Activated T-helper 2 cell treated with anti-CD3 and anti-CD28 coated beads, Interferon-gamma antibody, Interleukin-2, Interleukin-4, amounts not matched to agents 10 μg/mL and 5 μg/mL and 100 μg/mL, durations not matched to agents 14 hours and 24 hours and 36 hours (primary cell): ENCODE measurements at regions of chr6 and their contacts with region 1.

Region 1: GRCh38 chr6:17633465-17634188 is 33.5 kb downstream of the FAM8A1 start:
- DNase-seq: no peak
- H3K4me3 Mint-ChIP-seq: no peak overlapping the region
- H3K27ac Mint-ChIP-seq: peak overlapping the region; percentile 86
- H3K4me1 Mint-ChIP-seq: peaks cover 42% of the 10 kb centered on the region
- H3K27me3 Mint-ChIP-seq: no peaks in the 10 kb centered on the region

Region 2: DNA sequence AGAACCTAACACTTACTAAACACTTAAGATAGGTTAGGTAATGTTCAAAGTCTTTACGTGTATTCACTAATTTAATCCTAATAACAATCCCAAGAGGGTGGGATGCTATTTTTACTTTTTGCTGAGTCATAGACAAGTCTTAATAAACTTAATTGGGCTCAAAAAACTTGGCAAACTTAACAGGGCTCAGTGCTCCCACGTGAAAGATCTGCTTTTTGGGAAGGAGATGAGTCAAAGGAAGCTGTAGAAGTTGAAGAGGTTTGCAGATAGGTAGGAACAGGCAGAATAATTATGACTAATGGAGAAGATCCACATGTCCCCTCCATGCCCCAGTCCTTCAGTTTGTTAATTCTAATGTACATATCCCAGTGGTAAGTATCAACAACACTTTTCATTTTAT is 576.3 kb before region 1 on chr6:
- intact Hi-C with region 1: no loop called
- DNase-seq: no peak
- H3K4me3 Mint-ChIP-seq: no peak overlapping the region
- H3K27ac Mint-ChIP-seq: no peak overlapping the region
- H3K4me1 Mint-ChIP-seq: no peaks in the 10 kb centered on the region
- H3K27me3 Mint-ChIP-seq: peaks cover 9% of the 10 kb centered on the region

Region 3: GRCh38 chr6:17673543-17674254 is 40.1 kb after region 1 on chr6:
- intact Hi-C with region 1: loop called (anchors 2 kb)
- DNase-seq: no peak
- H3K4me3 Mint-ChIP-seq: no peak overlapping the region
- H3K27ac Mint-ChIP-seq: peak overlapping the region; percentile 74
- H3K4me1 Mint-ChIP-seq: peaks cover 35% of the 10 kb centered on the region
- H3K27me3 Mint-ChIP-seq: no peaks in the 10 kb centered on the region